ENCODE measurements at regions of chr12 and their contacts with region 1.

Region 1: DNA sequence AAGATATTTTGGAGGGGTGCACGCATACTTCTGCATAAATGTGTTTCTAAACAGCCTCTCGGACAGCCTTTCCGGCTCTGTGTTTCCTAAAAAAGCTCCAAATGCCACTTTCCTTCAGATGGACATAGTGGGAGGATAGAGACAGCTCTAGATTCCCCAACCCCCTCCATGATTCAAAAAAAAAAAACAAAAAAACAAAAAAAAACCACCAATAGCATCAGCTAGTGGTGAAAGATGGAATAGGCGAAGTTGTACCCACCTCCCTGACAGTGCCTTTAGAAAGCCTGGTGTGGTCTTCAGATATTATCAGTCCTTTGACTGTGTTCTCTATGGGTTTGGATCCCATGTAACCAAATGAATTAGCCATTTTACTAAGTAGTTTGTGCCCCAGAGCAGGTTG is 94.1 kb downstream of the PHETA1 start:
- DNase-seq: no peak
- ATAC-seq: no peak
- H3K4me3 ChIP-seq: no peak overlapping the region
- H3K4me3 Mint-ChIP-seq: no peak overlapping the region
- H3K27ac ChIP-seq: no peak overlapping the region
- H3K27ac Mint-ChIP-seq: no peak overlapping the region
- H3K4me1 ChIP-seq: no peaks in the 10 kb centered on the region
- H3K4me1 Mint-ChIP-seq: peaks cover 0 to 5% (median 0%) of the 10 kb centered on the region in 7 donors
- H3K27me3 ChIP-seq: peaks cover 0 to 3% of the 10 kb centered on the region in 2 donors
- H3K27me3 Mint-ChIP-seq: peaks cover 0 to 14% (median 8%) of the 10 kb centered on the region in 5 donors

Region 2: GRCh38 chr12:111024205-111024801 is 250.5 kb before region 1 on chr12:
- CTCF ChIA-PET with region 1: interaction called, 23 read pairs
- POLR2A ChIA-PET with region 1: no interaction called
- intact Hi-C with region 1: loop called in 1 of 2 experiments (anchors 1 kb)
- DNase-seq: peak in 8 of 9 donors; percentile 25 to 55 (median 40)
- ATAC-seq: peak; percentile 76
- H3K4me3 ChIP-seq: no peak overlapping the region
- H3K4me3 Mint-ChIP-seq: no peak overlapping the region
- H3K27ac ChIP-seq: no peak overlapping the region
- H3K27ac Mint-ChIP-seq: peak overlapping the region in 3 of 9 donors; percentile 33 to 77 (median 41)
- H3K4me1 ChIP-seq: peaks cover 0 to 6% of the 10 kb centered on the region in 2 donors
- H3K4me1 Mint-ChIP-seq: peaks cover 0 to 10% (median 6%) of the 10 kb centered on the region in 7 donors
- H3K27me3 ChIP-seq: no peaks in the 10 kb centered on the region
- H3K27me3 Mint-ChIP-seq: peaks cover 12 to 41% (median 25%) of the 10 kb centered on the region in 5 donors

Measured in naive thymus-derived CD4-positive, alpha-beta T cell (primary cell).